ENCODE measurements at regions of chr12 and their contacts with region 1.

Region 1: GRCh38 chr12:121668750-121669520 is 519 bp downstream of the MORN3 start:
- DNase-seq: no peak
- H3K4me3 ChIP-seq: no peak overlapping the region
- H3K27ac ChIP-seq: no peak overlapping the region
- H3K4me1 ChIP-seq: no peaks in the 10 kb centered on the region
- H3K27me3 ChIP-seq: no peaks in the 10 kb centered on the region
- CTCF ChIP-seq: peak; percentile 47

Region 2: GRCh38 chr12:120955232-120955631 is 713.7 kb before region 1 on chr12:
- intact Hi-C with region 1: no loop called
- DNase-seq: no peak
- H3K4me3 ChIP-seq: no peak overlapping the region
- H3K27ac ChIP-seq: no peak overlapping the region
- H3K4me1 ChIP-seq: peaks cover 5% of the 10 kb centered on the region
- H3K27me3 ChIP-seq: no peaks in the 10 kb centered on the region
- CTCF ChIP-seq: no peak

Region 3: GRCh38 chr12:121159467-121160307 is 509.2 kb before region 1 on chr12:
- intact Hi-C with region 1: no loop called
- DNase-seq: no peak
- H3K4me3 ChIP-seq: no peak overlapping the region
- H3K27ac ChIP-seq: no peak overlapping the region
- H3K4me1 ChIP-seq: no peaks in the 10 kb centered on the region
- H3K27me3 ChIP-seq: no peaks in the 10 kb centered on the region
- CTCF ChIP-seq: no peak

Region 4: DNA sequence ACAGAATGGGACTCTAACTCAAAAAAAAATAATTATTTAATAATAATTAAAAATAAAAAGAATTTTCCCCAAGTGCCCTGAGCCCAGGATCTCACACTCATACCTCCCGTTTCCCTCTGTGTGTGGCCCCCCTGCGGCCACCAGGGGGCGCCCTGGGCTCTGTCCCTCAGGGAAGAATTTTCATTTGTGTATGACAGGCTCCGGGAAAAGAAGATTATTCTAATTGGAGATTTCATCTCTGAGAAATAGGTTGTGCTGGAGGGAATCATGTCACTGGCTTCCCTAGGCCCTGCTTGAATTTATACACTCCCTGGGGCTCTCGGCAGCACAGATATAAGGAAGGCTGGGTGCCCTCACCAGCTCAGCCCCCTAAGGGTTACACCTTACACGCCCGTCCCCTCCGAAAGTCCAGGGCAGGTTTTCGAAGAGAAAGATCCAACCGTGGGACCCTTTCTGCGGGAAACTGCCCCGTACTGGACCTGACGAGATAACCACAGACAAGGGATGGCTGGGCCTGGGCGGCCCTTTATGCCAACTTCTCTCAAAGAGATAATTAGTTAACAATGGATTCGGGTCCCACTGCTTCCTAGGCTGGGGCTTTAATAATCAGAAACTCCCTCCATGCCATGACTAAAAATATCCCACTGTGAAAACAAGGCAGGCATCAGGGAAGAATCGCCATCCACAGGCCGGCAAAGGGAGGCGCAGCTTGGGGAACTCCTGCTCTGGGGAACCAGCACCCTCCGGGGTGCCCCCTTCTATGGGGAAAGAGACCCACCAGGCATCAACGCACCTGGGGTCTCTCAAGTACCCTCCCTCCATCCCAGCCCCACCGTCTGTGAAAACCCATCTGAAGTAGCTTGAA is 168.8 kb before region 1 on chr12:
- intact Hi-C with region 1: loop called (anchors 5 kb)
- DNase-seq: peak; percentile 80
- H3K4me3 ChIP-seq: no peak overlapping the region
- H3K27ac ChIP-seq: no peak overlapping the region
- H3K4me1 ChIP-seq: no peaks in the 10 kb centered on the region
- H3K27me3 ChIP-seq: no peaks in the 10 kb centered on the region
- CTCF ChIP-seq: peak; percentile 99

Region 5: DNA sequence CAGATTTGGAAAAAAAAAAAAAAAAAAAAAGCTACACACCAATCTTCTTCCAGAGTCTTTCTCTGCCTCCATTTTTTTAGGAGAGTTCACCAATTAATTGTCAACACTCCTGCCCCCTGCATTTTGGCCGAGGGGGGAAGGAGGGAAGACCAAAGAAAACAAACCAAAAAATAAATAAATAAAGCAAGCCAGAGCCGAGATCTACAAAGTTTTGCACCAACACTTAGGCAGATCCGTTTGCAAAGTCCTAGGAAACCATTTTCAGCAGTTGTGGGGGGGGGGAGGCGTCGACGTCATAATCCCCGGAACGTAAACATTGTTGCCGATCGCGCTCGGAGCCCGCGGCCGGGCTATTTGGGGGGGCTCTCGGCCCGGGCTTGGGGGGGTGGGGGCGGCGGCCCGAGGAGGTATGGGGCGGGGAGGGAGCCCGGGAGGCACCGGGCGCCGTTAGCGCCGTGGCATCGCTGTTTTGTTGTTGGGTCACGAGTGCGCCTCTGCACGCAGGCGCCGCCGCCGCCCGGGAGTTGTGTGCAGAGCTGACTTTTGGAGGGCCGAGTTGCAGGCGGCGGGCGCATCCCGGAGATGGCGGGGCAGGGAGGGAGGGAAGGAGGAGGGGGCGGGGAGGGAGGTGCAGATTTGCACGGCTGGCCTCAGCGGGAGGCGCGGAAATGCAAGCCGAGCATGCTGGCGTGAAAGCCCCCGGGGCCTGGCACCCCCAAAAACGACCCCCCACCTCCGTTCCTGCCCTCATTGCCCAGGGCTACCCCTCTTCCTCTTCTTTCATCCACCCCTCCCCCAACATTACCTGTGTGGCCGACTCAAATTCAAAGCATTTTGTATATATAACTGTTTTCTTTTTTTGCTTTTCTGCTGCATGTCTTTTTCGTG is 88.7 kb before region 1 on chr12:
- intact Hi-C with region 1: no loop called
- DNase-seq: peak; percentile 86
- H3K4me3 ChIP-seq: peak overlapping the region; percentile 55
- H3K27ac ChIP-seq: peak overlapping the region; percentile 60
- H3K4me1 ChIP-seq: peaks cover 5% of the 10 kb centered on the region
- H3K27me3 ChIP-seq: no peaks in the 10 kb centered on the region
- CTCF ChIP-seq: no peak

Region 6: GRCh38 chr12:121626087-121626852 is 42.7 kb before region 1 on chr12 and contains the start of gene ORAI1:
- intact Hi-C with region 1: loop called (anchors 5 kb)
- DNase-seq: peak; percentile 98
- H3K4me3 ChIP-seq: peak within 1 kb of the TSS; percentile 77
- H3K27ac ChIP-seq: peak within 1 kb of the TSS; percentile 99
- H3K4me1 ChIP-seq: peaks cover 17% of the 10 kb centered on the region
- H3K27me3 ChIP-seq: no peaks in the 10 kb centered on the region
- CTCF ChIP-seq: no peak
- total RNA-seq, gene ORAI1: 14.6 to 23.5 TPM

Measured in colonic mucosa (tissue), 4 donors.